ENCODE measurements at regions of chr10 and their contacts with region 1.

Region 1: DNA sequence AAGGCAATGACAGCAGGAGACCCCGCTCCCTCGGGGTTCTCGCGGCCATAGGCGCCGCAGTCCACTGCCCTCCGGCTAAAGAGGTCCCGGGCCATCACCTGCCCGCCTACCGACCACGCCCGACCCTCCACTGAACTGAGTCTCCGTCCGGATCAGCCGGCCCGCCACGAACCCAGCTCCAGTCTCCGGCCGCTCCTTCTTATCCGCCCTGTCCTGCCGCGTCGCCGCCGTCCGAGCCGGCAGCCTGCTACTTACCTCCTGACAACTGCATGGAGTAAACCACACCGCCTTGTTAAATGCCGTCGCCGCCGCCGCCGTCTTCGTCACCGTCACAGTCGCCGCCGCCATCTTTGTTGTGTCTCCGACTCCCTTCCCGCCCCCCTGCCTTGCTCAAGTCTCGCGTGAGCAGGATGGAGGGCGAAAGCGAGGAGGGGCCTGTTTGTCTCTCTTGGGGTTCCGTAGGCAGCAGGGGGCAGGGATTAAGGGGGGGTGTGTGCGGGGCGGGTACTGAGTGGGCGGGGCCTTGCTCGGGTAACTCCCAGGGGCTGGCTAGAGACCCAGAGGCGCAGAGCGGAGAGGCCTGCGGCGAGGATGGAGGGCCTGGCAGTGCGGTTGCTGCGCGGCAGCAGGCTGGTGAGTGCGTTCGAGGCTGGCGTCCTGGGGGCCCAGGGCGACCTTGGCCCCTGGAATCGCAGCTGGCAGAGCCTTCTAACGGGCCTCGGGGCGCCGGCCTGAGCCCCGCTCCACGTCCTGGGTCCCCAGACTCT is at the starts of genes ACADSB and IKZF5:
- DNase-seq: peak; percentile 98
- ATAC-seq: peak; percentile 91
- H3K4me3 Mint-ChIP-seq: peak within 1 kb of the TSS; percentile 97
- H3K27ac Mint-ChIP-seq: peak within 1 kb of the TSS; percentile 97
- H3K4me1 Mint-ChIP-seq: peaks cover 32% of the 10 kb centered on the region
- H3K27me3 Mint-ChIP-seq: no peaks in the 10 kb centered on the region
- total RNA-seq, gene ACADSB: 15.4 to 17.3 TPM
- total RNA-seq, gene IKZF5: 12.1 to 12.5 TPM

Region 2: DNA sequence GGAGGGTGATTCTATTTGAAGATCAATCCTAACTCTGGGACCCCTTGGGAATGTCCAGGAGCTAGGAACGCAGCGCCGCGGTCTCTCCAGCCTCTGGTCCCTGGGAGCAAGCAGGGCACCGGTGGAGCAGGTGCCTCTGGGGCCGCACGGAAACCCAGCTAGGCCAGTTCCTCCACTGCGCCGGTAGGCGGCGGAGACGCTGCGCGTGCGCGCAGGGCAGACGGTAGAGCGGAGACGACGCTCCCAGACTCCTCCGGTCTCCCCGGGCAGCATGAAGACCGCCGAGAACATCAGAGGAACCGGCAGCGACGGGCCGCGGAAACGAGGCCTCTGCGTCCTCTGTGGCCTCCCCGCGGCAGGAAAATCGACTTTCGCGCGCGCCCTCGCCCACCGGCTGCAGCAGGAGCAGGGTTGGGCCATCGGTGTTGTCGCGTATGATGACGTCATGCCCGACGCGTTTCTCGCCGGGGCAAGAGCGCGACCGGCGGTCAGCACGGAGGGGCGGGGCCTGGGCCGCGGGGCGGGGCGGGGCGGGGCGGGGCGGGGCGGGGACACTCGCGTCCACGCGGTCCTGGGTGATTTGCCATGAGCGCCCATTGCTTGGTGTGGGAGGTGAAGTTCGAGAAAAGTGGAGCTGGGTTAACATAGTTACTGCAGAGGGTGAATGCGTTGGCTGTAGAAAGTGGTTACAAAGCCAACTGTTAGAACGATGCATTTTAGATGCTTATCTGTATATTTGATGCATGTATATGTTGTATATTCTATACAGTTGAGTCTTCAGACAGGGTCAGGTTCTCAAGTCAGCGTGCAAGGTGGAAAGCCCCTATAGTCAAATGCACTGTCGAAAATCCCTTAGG is 28.2 kb before region 1 on chr10 and contains the start of gene PSTK:
- CTCF ChIA-PET with region 1: interaction called, 39 read pairs
- POLR2A ChIA-PET with region 1: interaction called, 32 read pairs
- DNase-seq: peak; percentile 92
- ATAC-seq: peak; percentile 99
- H3K4me3 Mint-ChIP-seq: peak within 1 kb of the TSS; percentile 81
- H3K27ac Mint-ChIP-seq: peak within 1 kb of the TSS; percentile 97
- H3K4me1 Mint-ChIP-seq: peaks cover 16% of the 10 kb centered on the region
- H3K27me3 Mint-ChIP-seq: peaks cover 6% of the 10 kb centered on the region
- total RNA-seq, gene PSTK: 3.2 to 4.0 TPM

Region 3: DNA sequence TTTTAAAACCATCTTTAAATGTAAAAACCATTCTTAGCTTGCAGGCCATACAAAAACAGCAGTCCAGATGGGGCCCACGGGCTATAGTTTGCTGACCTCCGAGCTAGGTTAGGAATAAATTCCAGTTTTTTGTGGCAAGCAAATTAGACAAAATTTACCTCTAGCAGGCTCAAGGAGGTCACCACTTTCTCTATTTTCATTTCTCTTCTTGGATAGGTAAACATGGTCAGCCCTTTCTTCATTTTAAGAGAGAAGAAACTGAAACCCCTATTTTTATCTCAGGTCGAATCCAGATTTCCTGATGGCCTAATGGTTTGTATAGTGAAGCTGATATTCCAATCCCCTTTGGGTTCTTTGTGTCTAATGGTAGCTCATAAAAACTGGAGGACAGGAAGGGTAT is 10.8 kb before region 1 on chr10:
- CTCF ChIA-PET with region 1: interaction called, 3 read pairs
- POLR2A ChIA-PET with region 1: interaction called, 12 read pairs
- DNase-seq: no peak
- ATAC-seq: no peak
- H3K4me3 Mint-ChIP-seq: no peak overlapping the region
- H3K27ac Mint-ChIP-seq: no peak overlapping the region
- H3K4me1 Mint-ChIP-seq: peaks cover 9% of the 10 kb centered on the region
- H3K27me3 Mint-ChIP-seq: no peaks in the 10 kb centered on the region

Region 4: DNA sequence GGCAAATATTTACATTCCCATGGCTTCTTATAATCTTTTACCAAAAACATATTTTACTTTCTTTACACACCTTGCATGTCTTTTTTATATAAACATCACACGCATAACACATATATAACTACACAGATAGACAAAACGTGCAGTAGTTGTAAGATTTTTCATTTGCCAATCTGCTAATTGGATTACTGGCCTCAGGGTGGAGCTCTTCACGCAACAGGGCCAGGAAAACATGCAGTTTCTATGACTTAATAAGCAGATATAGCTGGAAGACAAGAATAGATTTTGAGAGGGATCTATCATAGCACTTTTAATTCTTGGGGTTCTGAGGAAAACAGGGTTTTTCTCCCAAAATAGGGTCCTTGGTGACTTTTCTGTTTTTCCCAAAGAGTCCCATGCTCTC is 12.9 kb after region 1 on chr10:
- CTCF ChIA-PET with region 1: interaction called, 20 read pairs
- POLR2A ChIA-PET with region 1: interaction called, 3 read pairs
- DNase-seq: no peak
- ATAC-seq: no peak
- H3K4me3 Mint-ChIP-seq: no peak overlapping the region
- H3K27ac Mint-ChIP-seq: no peak overlapping the region
- H3K4me1 Mint-ChIP-seq: peaks cover 4% of the 10 kb centered on the region
- H3K27me3 Mint-ChIP-seq: no peaks in the 10 kb centered on the region

Measured in activated CD8-positive, alpha-beta T cell treated with anti-CD3 and anti-CD28 coated beads, Interleukin-2, amount 10 ng/mL, durations not matched to agents 7 days and 5 days (primary cell).